Lower lobe of right lung (tissue), 2 donors: ENCODE measurements at regions of chr3 and their contacts with region 1.

Region 1: GRCh38 chr3:64030741-64031140 is 7.4 kb upstream of the PSMD6 start:
- DNase-seq: peak; percentile 76
- ATAC-seq: peak; percentile 93 to 95
- H3K4me3 ChIP-seq: peak overlapping the region; percentile 37
- H3K27ac ChIP-seq: no peak overlapping the region
- H3K4me1 ChIP-seq: no peaks in the 10 kb centered on the region
- H3K27me3 ChIP-seq: no peaks in the 10 kb centered on the region
- CTCF ChIP-seq: peak; percentile 78

Region 2: GRCh38 chr3:64399205-64399800 is 368.6 kb after region 1 on chr3:
- intact Hi-C with region 1: loop called (anchors 5 kb)
- DNase-seq: no peak
- ATAC-seq: peak; percentile 65 to 81
- H3K4me3 ChIP-seq: no peak overlapping the region
- H3K27ac ChIP-seq: no peak overlapping the region
- H3K4me1 ChIP-seq: peaks cover 4% of the 10 kb centered on the region
- H3K27me3 ChIP-seq: no peaks in the 10 kb centered on the region
- CTCF ChIP-seq: peak; percentile 73

Region 3: DNA sequence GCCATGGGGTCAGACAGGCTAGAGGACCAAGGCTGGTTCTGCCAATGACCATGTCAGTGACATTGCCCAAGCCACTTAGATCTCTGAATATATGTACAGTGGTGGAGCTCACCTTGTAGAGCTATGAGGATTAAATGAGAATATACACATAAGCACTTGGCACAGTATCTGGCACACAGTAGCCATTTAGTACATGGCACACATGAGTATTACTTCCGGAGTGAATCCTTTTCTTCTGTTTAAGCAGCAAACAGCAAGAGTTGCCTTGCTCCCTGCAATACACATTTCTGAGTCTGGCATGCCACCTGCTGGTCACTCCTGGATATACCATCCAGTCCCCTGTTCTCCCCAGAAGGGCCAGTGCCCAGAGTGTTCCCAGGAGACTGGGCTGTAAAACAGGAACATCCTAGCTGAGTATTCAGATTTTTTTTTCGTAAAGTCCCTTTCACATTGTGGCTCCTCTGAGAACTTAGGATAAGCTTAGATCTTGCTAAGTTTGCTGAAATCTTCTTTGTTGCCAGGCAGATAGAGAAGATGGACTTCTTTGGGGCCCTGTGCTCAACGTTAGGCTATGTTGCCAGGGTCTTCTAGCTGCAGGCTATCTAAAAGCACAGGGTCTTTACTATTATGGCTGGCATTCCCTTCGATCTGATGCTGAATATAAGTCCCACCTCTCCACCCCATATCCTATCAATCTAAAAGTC is 453.7 kb after region 1 on chr3:
- intact Hi-C with region 1: loop called (anchors 10 kb)
- DNase-seq: peak; percentile 66
- ATAC-seq: peak; percentile 90 to 93
- H3K4me3 ChIP-seq: no peak overlapping the region
- H3K27ac ChIP-seq: no peak overlapping the region
- H3K4me1 ChIP-seq: peaks cover 5% of the 10 kb centered on the region
- H3K27me3 ChIP-seq: no peaks in the 10 kb centered on the region
- CTCF ChIP-seq: peak; percentile 90